ENCODE measurements at regions of chr3 and their contacts with region 1.

Region 1: DNA sequence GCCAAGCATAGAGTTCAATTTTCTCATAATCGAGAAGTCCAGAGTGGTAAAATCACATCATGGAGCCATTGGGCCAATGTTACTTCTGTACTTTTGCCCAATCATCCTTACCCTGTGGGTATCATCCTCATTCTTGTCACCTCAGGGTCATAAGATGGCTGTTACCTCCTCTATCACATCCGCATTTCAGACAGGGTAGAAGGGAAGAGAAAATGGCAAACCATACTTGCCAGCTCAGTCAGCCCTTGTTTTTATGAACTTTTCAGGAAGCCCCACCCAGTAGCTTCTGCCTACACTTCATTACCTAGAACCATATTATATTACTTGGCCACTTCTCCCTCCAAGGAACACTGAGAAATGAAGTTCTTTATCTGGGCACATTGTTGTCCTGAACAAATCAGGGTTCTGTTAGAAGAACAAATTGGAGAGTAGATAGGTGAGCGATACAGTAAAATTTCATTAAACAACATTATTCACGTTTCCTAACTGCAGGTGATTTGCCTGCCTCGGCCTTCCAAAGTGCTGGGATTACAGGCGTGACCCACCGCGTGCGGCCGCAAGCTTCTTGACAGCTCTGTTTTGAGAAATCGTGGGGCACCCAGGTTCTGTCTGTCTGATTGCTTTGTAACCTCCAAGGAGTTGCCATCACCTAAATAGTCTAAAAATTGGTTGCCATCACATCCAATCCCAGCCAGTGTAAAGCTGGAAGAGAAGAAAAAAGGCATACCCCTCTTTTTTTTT is 34.5 kb upstream of the RPN1 start:
- DNase-seq: no peak

Region 2: GRCh38 chr3:128794770-128795649 is 109.9 kb after region 1 on chr3:
- in situ Hi-C with region 1: loop called (anchors 5 kb)
- DNase-seq: peak; percentile 80

Measured in G401 (cell line).